ENCODE measurements at regions of chr12 and their contacts with region 1.

Region 1: DNA sequence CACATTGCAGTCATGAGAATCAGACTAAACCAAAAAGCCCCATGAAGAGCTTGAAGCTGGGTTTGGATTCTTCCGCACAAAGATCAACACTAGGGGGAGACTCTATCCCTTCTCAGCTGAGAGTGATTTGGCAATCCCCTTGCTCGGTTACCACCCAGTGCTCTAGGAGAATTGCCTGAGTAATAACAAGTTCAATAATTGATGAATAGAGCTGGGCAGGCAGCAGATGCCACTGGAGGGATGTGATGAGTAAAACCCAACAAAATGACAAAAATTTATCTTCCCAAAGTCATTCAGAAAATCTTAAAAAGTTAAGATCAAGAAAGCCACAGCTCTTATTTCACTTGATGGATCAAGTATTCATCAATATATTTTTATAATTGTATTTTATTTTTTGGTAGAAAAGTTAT is 185.6 kb upstream of the ARID2 start:
- DNase-seq: peak; percentile 56
- H3K4me3 ChIP-seq: no peak overlapping the region
- H3K27ac ChIP-seq: no peak overlapping the region
- H3K4me1 ChIP-seq: no peaks in the 10 kb centered on the region
- H3K27me3 ChIP-seq: no peaks in the 10 kb centered on the region
- CTCF ChIP-seq: peak; percentile 63

Region 2: GRCh38 chr12:45102818-45103217 is 441.1 kb before region 1 on chr12:
- intact Hi-C with region 1: no loop called
- DNase-seq: no peak
- H3K4me3 ChIP-seq: no peak overlapping the region
- H3K27ac ChIP-seq: no peak overlapping the region
- H3K4me1 ChIP-seq: no peaks in the 10 kb centered on the region
- H3K27me3 ChIP-seq: no peaks in the 10 kb centered on the region
- CTCF ChIP-seq: no peak

Region 3: GRCh38 chr12:45745861-45746277 is 202.0 kb after region 1 on chr12:
- intact Hi-C with region 1: loop called (anchors 10 kb)
- DNase-seq: no peak
- H3K4me3 ChIP-seq: no peak overlapping the region
- H3K27ac ChIP-seq: no peak overlapping the region
- H3K4me1 ChIP-seq: no peaks in the 10 kb centered on the region
- H3K27me3 ChIP-seq: no peaks in the 10 kb centered on the region
- CTCF ChIP-seq: peak; percentile 21